Adrenal gland (tissue), 19 donors: ENCODE measurements at regions of chr2 and their contacts with region 1.

Region 1: DNA sequence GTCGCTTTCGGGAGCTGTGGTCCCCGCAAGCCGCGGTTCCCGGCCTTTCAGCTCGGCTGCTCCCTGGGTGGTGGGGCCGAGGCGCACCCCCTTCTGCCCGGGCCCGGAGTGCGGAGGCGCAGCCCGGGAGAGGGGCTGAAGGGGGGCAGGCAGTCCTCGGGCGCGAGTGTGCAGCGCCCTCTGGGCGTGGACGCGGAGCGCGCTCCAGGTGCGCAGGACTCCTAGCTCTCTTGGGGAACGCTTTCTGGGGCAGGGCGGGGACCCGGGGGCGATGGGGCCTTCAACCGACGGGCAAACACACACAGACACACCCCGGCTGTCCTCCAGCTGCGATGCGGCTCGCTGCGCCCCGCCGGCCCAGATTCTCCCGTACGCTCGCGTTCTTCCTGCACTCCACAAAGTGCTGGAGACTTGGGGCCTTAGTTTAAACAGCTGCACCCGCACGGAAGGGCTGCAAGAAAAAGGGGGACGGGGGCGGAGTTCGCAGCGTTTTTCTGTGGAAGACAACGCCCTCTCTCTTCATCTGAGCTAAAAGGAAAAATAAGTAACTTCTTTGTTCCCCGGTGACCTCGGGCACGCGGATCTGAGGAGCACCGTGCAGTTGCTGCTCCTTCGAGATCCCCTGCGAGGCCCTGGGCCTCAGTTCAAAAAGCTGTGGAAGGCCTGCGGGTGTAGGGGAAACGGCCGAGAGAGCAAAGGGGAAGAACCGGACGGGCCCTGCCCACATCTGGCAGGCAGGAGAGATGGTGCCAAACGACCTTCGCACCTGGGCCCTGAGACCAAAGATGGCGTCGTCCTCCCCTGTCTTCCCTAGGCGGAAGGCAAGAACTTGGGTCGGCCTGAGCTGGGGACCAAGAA is 593 bp upstream of the SDC1 start:
- DNase-seq: peak; percentile 54 to 76 (median 66)
- H3K4me3 ChIP-seq: peak overlapping the region in 2 of 4 donors; percentile 46 to 83
- H3K27ac ChIP-seq: peak overlapping the region in 3 of 5 donors; percentile 17 to 92 (median 87)
- H3K4me1 ChIP-seq: peaks cover 0 to 10% of the 10 kb centered on the region in 2 donors
- H3K27me3 ChIP-seq: peaks cover 6% of the 10 kb centered on the region
- CTCF ChIP-seq: peak; percentile 37 to 59 (median 52)
- POLR2A ChIP-seq: no peak

Region 2: GRCh38 chr2:19611491-19612332 is 613.8 kb before region 1 on chr2:
- intact Hi-C with region 1: no loop called
- DNase-seq: no peak
- H3K4me3 ChIP-seq: no peak overlapping the region
- H3K27ac ChIP-seq: no peak overlapping the region
- H3K4me1 ChIP-seq: no peaks in the 10 kb centered on the region
- H3K27me3 ChIP-seq: no peaks in the 10 kb centered on the region
- CTCF ChIP-seq: no peak
- POLR2A ChIP-seq: no peak

Region 3: DNA sequence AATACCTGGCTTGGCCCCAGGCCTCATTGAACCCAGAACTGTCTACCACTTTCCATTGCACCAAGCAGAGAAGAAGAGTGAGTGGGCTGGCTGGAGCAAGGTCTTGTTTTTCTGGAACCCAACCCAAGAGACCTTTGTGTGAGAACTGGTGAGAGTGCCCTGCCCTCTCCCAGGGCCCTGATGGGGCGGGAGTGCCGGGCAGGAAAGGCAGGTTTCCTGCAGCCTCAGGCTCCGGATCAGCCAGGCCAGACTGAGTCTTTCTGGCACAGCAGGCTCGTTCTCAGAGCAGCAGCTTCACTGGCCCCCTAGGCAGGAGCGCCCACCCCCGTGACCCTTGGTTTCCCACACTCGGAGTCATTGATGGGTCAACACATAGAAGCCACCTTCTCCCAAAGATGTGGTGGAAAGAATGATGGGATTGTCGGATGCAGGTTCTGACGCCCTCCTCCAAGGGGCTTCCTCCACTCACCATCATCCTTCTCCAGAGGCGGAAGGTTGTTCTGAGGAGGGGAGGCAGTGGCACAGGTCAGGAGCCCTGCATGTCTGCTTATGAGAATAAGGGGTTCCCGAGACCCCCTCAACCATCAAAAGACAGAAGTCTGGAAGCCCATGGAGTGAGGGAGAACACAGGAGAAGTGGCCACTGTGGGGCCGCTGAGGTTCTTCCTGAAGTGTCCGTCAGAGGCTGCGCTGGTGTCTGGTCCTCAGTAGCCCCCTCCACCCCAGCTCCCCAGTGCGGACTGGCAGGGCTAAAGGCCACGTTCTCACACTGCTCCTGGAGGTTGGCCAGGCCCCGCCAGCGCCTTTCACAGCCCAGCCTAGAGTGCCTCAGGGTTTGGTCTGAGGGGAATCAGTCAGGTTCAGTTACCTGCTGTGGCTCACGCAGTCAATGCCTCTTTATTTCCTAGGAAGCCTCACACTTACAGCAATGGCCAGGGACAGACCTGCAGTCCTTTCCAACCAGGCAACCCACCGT is 111.3 kb before region 1 on chr2:
- intact Hi-C with region 1: loop called in 1 of 2 experiments (anchors 5 kb)
- DNase-seq: no peak
- H3K4me3 ChIP-seq: no peak overlapping the region
- H3K27ac ChIP-seq: no peak overlapping the region
- H3K4me1 ChIP-seq: no peaks in the 10 kb centered on the region
- H3K27me3 ChIP-seq: no peaks in the 10 kb centered on the region
- CTCF ChIP-seq: no peak
- POLR2A ChIP-seq: no peak

Region 4: DNA sequence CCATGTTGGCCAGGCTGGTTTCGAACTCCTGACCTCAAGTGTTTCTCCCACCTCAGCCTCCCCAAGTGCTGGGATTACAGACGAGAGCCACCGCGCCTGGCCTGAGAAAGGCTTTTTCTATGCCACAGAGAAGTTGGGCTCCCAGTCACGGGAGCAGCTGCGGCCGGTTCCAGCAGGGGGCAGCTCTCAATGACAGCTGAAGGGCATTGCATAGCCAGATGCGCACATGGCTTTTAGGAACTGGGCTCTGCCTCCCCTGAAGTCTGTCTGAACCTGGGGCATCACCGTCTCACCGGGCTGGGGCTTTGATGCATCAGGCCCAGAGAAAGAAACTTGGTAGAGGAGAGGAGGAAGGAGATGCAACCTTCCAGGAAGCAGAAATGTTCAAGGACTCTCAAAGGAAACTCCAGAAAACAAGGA is 89.9 kb before region 1 on chr2:
- intact Hi-C with region 1: loop called (anchors 5 kb)
- DNase-seq: peak; percentile 66 to 87 (median 81)
- H3K4me3 ChIP-seq: no peak overlapping the region
- H3K27ac ChIP-seq: no peak overlapping the region
- H3K4me1 ChIP-seq: no peaks in the 10 kb centered on the region
- H3K27me3 ChIP-seq: no peaks in the 10 kb centered on the region
- CTCF ChIP-seq: peak; percentile 65 to 86 (median 78)
- POLR2A ChIP-seq: no peak

Region 5: GRCh38 chr2:20179755-20180594 is 45.5 kb before region 1 on chr2:
- intact Hi-C with region 1: loop called in 1 of 2 experiments (anchors 5 kb)
- DNase-seq: peak in 1 of 7 donors; percentile 13
- H3K4me3 ChIP-seq: no peak overlapping the region
- H3K27ac ChIP-seq: no peak overlapping the region
- H3K4me1 ChIP-seq: no peaks in the 10 kb centered on the region
- H3K27me3 ChIP-seq: no peaks in the 10 kb centered on the region
- CTCF ChIP-seq: no peak
- POLR2A ChIP-seq: no peak